Activated CD8-positive, alpha-beta T cell treated with anti-CD3 and anti-CD28 coated beads, Interleukin-2, amount 10 ng/mL, durations not matched to agents 7 days and 5 days (primary cell): ENCODE measurements at regions of chr3 and their contacts with region 1.

Region 1: GRCh38 chr3:115169808-115170207 is 22.7 kb upstream of the ZBTB20 start:
- DNase-seq: no peak
- ATAC-seq: no peak
- H3K4me3 Mint-ChIP-seq: no peak overlapping the region
- H3K27ac Mint-ChIP-seq: no peak overlapping the region
- H3K4me1 Mint-ChIP-seq: peaks cover 13% of the 10 kb centered on the region
- H3K27me3 Mint-ChIP-seq: peaks cover 2% of the 10 kb centered on the region

Region 2: GRCh38 chr3:115092220-115092791 is 77.5 kb before region 1 on chr3:
- CTCF ChIA-PET with region 1: interaction called, 79 read pairs
- POLR2A ChIA-PET with region 1: no interaction called
- DNase-seq: peak; percentile 70
- ATAC-seq: peak; percentile 51
- H3K4me3 Mint-ChIP-seq: no peak overlapping the region
- H3K27ac Mint-ChIP-seq: no peak overlapping the region
- H3K4me1 Mint-ChIP-seq: no peaks in the 10 kb centered on the region
- H3K27me3 Mint-ChIP-seq: no peaks in the 10 kb centered on the region

Region 3: GRCh38 chr3:115099986-115100571 is 69.7 kb before region 1 on chr3:
- CTCF ChIA-PET with region 1: interaction called, 79 read pairs
- POLR2A ChIA-PET with region 1: no interaction called
- DNase-seq: peak; percentile 46
- ATAC-seq: peak; percentile 90
- H3K4me3 Mint-ChIP-seq: peak overlapping the region; percentile 75
- H3K27ac Mint-ChIP-seq: peak overlapping the region; percentile 78
- H3K4me1 Mint-ChIP-seq: peaks cover 19% of the 10 kb centered on the region
- H3K27me3 Mint-ChIP-seq: no peaks in the 10 kb centered on the region

Region 4: DNA sequence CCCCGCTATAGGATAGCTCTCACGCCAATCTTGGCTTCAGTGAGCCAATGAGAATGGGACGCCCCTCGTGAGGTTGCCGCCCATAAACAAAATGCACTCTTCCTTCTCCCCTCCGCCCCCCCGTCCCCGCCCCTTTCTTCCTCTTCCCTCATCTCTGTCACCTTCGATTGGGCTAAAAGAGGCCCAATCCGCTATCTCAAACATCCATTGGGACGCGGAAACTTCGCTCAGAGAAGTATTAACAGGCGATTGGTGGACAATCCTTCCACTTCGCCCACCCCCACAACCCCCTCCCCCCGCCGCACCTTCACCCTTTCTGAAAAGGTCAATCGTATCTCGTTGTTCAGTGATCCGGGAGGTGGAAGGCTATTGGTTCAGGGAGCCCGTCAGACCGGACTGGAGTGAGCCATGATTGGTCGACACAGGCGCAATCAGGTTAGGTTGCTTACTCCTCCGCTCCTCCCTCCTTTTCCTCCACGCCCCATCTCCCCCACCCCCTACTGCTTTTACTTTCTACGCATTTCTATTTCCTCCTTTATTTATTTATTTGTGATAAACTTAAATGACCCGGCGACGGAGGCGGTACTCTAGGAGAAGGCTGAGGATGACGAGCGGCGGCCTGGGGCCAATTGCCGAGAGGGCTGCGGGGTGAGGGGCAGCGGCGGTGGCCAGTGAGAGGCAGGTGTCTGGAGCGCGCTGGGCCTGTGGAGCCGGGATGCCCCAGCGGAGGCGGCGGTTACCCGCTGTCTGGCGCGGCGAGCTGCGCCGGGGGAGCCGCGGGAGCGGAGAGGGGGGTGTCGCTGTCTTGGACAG is 22.3 kb before region 1 on chr3:
- CTCF ChIA-PET with region 1: interaction called, 48 read pairs
- POLR2A ChIA-PET with region 1: interaction called, 67 read pairs
- DNase-seq: peak; percentile 99
- ATAC-seq: peak; percentile 88
- H3K4me3 Mint-ChIP-seq: peak overlapping the region; percentile 92
- H3K27ac Mint-ChIP-seq: peak overlapping the region; percentile 96
- H3K4me1 Mint-ChIP-seq: peaks cover 19% of the 10 kb centered on the region
- H3K27me3 Mint-ChIP-seq: peaks cover 1% of the 10 kb centered on the region